HEK293T (cell line): ENCODE measurements at regions of chr6 and their contacts with region 1.

Region 1: GRCh38 chr6:21109391-21110178 is 484.0 kb upstream of the SOX4 start:
- DNase-seq: no peak

Region 2: DNA sequence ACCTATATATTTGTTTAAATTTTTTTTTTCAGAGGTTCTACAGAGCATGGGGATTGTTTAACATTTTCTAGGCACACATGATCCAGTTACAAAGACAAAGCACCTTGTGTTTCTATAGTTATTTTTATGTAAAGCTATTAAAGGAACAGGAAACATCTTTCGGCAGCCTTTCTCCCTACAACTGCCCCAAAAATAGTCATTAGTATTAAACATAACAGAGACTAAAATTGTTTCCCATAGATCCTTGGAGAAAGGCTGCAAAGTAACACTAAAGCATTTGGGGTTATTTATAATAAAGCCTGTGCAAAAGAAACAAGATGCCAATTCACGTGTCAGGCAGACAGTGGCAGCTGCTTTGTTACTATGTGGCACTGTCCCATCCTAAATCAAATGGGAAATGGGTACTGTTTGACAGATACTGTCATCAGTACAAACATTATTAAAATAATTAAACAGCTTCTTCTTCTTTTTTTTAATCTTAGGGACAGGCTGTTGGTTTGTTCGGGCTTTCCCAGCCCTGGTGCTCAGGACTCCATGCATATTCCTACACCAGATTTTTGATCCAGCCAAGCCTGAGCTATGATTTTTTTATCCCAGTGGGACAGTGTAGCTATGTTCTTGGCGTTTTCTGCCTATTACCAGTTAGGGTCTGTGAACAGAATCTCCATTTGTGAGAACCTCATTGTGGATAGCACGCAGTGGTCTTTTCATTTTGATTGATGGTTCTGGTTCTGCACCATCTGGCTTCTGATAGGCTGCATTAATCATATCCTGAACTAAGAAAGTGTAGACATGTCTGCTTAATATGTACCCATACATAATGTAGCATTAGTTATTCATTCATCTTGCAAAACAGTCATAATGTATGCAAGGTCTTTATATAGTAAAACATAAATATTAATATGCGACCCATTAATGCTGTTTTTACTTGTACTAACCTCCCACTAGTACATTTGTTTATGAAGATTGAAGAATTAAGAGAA is 23.6 kb after region 1 on chr6:
- CTCF ChIA-PET with region 1: no interaction called
- POLR2A ChIA-PET with region 1: no interaction called
- DNase-seq: no peak

Region 3: GRCh38 chr6:21511891-21512550 is 402.4 kb after region 1 on chr6:
- CTCF ChIA-PET with region 1: interaction called, 14 read pairs
- POLR2A ChIA-PET with region 1: no interaction called
- DNase-seq: no peak